ENCODE measurements at regions of chr11 and their contacts with region 1.

Region 1: DNA sequence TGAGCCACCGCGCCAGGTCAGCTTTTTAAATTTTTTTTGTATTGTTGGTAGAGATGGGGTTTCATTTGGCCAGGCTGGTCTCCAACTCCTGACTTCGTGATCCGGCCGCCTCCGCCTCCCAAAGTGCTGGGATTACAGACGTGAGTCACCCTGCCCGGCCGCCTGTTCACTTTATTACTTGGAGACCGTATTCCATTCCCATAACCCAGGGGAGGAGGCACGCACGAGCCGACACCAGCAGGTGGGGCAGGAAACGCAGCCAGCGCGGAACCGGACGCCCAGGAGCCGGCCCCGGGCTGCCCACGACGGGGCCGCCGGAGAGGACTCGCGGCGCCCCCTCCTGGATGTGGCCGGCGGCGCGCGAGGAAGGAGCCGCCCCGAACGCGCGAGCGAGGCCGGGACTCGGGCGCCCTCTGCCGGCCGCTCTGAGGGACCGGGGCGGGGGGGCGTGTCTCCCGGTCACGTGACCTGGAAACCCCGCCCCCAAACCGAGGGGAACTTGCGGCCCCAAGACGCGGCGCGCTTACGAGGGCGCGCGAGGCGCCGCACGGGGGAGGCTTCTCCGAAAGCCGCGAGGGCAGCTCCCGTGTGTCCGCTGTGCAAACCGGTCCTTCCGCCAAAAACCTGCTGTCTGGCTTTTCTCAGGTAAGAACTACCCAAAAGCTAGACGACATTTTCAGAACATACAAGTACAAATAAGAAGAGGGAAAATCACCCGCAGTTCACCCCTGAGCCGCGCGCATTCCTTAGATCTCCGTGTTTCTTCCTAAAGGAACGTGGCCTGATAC is 11.6 kb upstream of the RNH1 start:
- DNase-seq: peak; percentile 91
- H3K27ac ChIP-seq: peak overlapping the region; percentile 97
- CTCF ChIP-seq: peak; percentile 100

Region 2: DNA sequence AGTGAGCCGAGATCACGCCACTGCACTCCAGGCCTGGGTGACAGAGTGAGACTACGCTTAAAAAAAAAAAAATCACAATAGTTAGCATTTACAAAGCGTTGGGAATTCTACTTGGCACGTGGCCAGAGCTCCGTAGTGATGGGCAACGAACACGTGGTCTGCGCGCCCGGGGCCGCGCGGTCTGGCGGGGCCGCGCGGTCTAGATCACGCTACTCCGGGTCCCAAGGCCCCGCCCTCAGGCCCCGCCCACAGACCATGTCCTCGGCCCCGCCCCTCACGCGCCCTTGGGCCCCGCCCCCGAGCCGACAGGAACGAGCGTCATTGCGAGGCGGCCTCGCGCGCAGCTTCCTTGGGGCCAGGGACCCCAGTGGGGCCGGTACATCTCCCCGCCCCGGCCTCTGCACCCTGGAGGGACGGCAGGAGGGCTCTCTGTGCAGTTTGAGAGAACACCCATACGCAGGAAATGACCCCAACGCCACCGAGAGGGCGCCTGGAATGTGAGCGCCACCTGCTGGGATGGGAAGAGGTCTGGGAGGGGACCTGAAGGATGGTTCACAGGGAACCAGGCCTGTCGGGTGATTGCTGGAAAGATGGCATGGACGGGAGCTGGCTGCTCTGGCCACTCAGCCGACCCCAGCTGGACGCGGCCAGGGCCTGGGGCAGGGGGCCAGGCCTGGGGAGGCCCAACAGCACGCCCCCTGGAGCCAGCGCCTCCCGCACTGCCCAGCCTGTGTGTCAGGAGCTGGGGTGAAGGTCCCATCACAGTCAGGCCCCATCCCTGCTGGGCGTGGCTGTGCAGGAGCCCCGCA is 70.5 kb before region 1 on chr11:
- CTCF ChIA-PET with region 1: interaction called, 3 read pairs
- POLR2A ChIA-PET with region 1: interaction called, 11 read pairs
- DNase-seq: peak; percentile 91
- H3K27ac ChIP-seq: peak overlapping the region; percentile 92
- CTCF ChIP-seq: peak; percentile 90